Activated T-helper 2 cell treated with anti-CD3 and anti-CD28 coated beads, Interferon-gamma antibody, Interleukin-2, Interleukin-4, amounts not matched to agents 10 μg/mL and 5 μg/mL and 100 μg/mL, durations not matched to agents 14 hours and 24 hours and 36 hours (primary cell): ENCODE measurements at regions of chr2 and their contacts with region 1.

Region 1: GRCh38 chr2:19901442-19902215 is at the start of gene TTC32:
- DNase-seq: peak; percentile 90
- H3K4me3 Mint-ChIP-seq: peak within 1 kb of the TSS; percentile 89
- H3K27ac Mint-ChIP-seq: peak within 1 kb of the TSS; percentile 95
- H3K4me1 Mint-ChIP-seq: peaks cover 48% of the 10 kb centered on the region
- H3K27me3 Mint-ChIP-seq: peaks cover 2% of the 10 kb centered on the region
- total RNA-seq, gene TTC32: 14.8 TPM in 2 replicates

Region 2: DNA sequence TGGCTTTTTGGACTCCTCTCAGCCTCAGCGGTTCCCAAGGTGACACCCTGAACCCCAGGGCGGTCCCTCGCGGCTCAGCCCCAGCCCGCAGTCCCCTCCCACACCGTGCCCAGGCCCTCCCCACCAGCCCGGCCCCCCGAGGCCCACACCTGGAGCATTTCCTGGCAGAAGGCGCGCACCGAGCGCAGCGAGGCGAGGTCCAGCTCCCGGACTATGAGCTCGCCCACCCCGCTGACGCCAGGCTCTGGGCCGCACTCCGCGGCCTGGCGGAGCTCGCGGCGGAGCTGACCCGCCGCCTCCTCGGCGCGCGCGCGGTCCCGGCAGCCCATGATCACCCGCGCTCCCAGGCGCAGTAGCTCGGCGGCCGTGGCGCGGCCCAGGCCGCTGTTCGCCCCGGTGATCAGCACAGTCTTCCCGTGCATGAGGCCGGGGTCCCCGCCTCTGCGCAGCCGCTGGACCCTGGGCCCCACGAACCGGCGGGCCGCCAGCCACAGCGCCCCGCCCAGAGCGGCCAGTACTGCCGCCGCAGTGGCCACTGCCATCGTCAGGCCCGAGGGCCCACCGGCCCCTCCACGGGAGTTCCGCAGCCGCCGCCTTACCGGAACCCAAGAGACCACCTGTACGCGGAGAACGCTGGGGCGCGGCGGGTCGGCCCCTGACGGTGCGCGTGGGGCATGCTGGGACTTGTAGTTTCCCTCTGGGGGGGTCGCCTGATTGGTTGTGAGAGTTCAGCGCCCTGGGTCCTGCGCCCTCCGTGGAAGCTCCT is 1341.4 kb before region 1 on chr2 and contains the start of gene RDH14:
- intact Hi-C with region 1: loop called (anchors 5 kb)
- DNase-seq: peak; percentile 86
- H3K4me3 Mint-ChIP-seq: peak within 1 kb of the TSS; percentile 88
- H3K27ac Mint-ChIP-seq: peak within 1 kb of the TSS; percentile 90
- H3K4me1 Mint-ChIP-seq: peaks cover 31% of the 10 kb centered on the region
- H3K27me3 Mint-ChIP-seq: no peaks in the 10 kb centered on the region
- total RNA-seq, gene RDH14: 12.4 and 15.2 TPM in 2 replicates

Region 3: GRCh38 chr2:19851116-19851695 is 50.4 kb before region 1 on chr2:
- intact Hi-C with region 1: no loop called
- DNase-seq: no peak
- H3K4me3 Mint-ChIP-seq: no peak overlapping the region
- H3K27ac Mint-ChIP-seq: no peak overlapping the region
- H3K4me1 Mint-ChIP-seq: no peaks in the 10 kb centered on the region
- H3K27me3 Mint-ChIP-seq: peaks cover 2% of the 10 kb centered on the region

Region 4: DNA sequence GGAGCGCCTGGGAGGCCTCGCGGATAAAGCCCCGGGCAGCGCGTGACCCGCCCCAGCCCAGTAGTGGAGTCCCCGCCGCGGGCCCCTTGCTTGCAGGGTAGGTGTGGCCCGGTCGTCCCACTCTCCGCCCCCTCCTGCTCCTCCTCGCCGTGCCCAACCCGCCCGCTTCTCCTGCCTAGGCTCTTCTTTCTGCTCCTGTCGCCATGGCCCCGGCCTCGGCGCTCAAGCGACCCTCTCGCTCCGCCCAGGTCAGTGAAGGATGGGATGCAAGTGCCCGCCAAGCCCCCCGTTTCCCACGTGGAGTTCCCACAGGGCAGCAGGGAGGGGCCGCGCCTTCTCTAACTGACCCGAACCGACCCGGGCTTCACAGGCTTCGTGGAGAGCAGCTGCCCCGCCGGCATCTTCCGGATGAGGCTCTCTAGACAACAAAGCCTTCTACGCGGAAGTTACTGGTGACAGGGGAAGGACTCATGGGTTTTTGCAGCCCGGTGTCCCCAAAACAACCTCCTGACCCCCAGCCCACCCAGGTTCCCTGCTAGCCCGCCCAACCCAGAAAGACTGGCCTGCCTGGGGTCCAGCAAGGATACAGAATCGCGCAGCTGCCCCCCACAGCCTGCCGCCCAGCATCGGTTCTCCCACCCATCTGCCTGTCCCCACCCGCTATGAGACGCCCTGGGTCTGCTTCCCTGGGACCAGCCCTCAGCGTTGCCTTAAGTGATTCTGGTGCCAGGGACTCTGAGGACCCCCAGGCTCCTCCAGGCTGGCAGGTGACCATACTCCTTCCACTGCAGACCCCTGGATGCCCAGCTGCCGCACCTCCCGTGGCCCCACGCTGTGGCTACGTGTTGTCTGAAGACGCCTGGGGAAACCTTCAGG is 32.7 kb before region 1 on chr2:
- intact Hi-C with region 1: no loop called
- DNase-seq: peak; percentile 51
- H3K4me3 Mint-ChIP-seq: peak overlapping the region; percentile 84
- H3K27ac Mint-ChIP-seq: peak overlapping the region; percentile 83
- H3K4me1 Mint-ChIP-seq: peaks cover 22% of the 10 kb centered on the region
- H3K27me3 Mint-ChIP-seq: no peaks in the 10 kb centered on the region

Region 5: GRCh38 chr2:19989681-19990415 is 88.2 kb after region 1 on chr2 and contains the start of gene WDR35:
- intact Hi-C with region 1: loop called (anchors 2 kb)
- DNase-seq: peak; percentile 90
- H3K4me3 Mint-ChIP-seq: peak within 1 kb of the TSS; percentile 87
- H3K27ac Mint-ChIP-seq: peak within 1 kb of the TSS; percentile 70
- H3K4me1 Mint-ChIP-seq: peaks cover 18% of the 10 kb centered on the region
- H3K27me3 Mint-ChIP-seq: peaks cover 29% of the 10 kb centered on the region
- total RNA-seq, gene WDR35: 7.5 and 7.6 TPM in 2 replicates

Region 6: GRCh38 chr2:20196554-20197161 is 295.0 kb after region 1 on chr2:
- intact Hi-C with region 1: no loop called
- DNase-seq: no peak
- H3K4me3 Mint-ChIP-seq: no peak overlapping the region
- H3K27ac Mint-ChIP-seq: no peak overlapping the region
- H3K4me1 Mint-ChIP-seq: no peaks in the 10 kb centered on the region
- H3K27me3 Mint-ChIP-seq: no peaks in the 10 kb centered on the region

Region 7: GRCh38 chr2:20350753-20351554 is 449.3 kb after region 1 on chr2 and contains the start of gene PUM2:
- intact Hi-C with region 1: loop called (anchors 1 kb)
- DNase-seq: peak; percentile 97
- H3K4me3 Mint-ChIP-seq: peak within 1 kb of the TSS; percentile 93
- H3K27ac Mint-ChIP-seq: peak within 1 kb of the TSS; percentile 92
- H3K4me1 Mint-ChIP-seq: peaks cover 34% of the 10 kb centered on the region
- H3K27me3 Mint-ChIP-seq: no peaks in the 10 kb centered on the region
- total RNA-seq, gene PUM2: 121 and 127 TPM in 2 replicates

Region 8: GRCh38 chr2:20578895-20579825 is 677.5 kb after region 1 on chr2:
- intact Hi-C with region 1: loop called (anchors 2 kb)
- DNase-seq: no peak
- H3K4me3 Mint-ChIP-seq: no peak overlapping the region
- H3K27ac Mint-ChIP-seq: peak overlapping the region; percentile 79
- H3K4me1 Mint-ChIP-seq: peaks cover 40% of the 10 kb centered on the region
- H3K27me3 Mint-ChIP-seq: no peaks in the 10 kb centered on the region